ENCODE measurements at regions of chr5 and their contacts with region 1.

Region 1: DNA sequence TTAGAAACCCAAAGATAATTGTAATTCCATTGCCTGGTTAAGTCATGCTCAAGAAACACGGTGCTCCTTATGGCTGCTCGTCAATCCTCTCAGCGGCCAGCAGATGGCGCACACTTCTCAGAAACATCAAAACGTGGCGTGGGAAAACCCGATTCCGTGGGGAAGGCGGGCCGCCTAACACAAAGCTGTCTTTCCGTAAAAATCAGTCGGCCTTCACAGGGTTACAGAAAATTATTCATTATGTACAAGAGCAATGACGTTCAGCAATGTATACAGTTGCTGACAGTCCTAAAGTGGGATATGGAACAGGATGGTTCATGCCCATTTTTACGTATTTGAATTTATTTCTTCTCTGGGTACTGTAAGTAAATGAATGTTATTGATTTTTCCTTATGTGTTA is 83.5 kb downstream of the PDE4D start:
- DNase-seq: peak; percentile 56
- ATAC-seq: peak; percentile 39
- H3K4me3 Mint-ChIP-seq: no peak overlapping the region
- H3K27ac Mint-ChIP-seq: no peak overlapping the region
- H3K4me1 Mint-ChIP-seq: peaks cover 2% of the 10 kb centered on the region
- H3K27me3 Mint-ChIP-seq: peaks cover 24% of the 10 kb centered on the region

Region 2: DNA sequence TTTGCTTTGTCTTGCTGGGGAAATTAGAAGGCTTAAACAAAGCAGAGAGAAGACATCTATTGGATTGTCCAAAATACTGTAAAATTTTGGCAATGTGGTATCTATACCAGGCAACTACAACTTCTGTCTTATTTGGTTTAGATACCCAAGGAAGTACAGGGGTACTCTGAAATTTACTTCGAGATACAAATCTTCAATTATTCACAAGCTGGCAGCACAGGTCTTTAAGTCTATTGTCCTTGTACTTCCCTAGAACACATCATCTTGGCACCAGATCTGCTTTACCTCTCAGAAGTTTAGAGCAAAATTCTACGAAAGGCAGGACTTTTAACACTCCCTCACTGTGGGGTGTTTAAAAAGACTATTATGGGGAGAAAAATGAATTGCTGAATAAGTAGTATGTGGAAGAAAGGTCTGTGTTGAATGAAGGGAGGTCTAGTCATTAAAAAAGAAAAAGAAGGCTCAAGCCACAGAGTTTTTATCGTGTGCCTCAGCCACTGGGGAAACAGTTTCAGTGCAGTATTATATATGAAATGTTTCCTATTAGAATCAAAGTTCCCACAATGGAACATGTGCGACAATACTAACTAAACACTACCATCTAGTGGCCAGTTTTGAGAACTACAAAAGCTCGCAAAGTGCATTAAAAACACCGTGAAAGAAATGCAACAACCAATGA is 10.2 kb before region 1 on chr5:
- CTCF ChIA-PET with region 1: interaction called, 16 read pairs
- DNase-seq: no peak
- ATAC-seq: peak; percentile 60
- H3K4me3 Mint-ChIP-seq: no peak overlapping the region
- H3K27ac Mint-ChIP-seq: no peak overlapping the region
- H3K4me1 Mint-ChIP-seq: no peaks in the 10 kb centered on the region
- H3K27me3 Mint-ChIP-seq: peaks cover 18% of the 10 kb centered on the region

Region 3: DNA sequence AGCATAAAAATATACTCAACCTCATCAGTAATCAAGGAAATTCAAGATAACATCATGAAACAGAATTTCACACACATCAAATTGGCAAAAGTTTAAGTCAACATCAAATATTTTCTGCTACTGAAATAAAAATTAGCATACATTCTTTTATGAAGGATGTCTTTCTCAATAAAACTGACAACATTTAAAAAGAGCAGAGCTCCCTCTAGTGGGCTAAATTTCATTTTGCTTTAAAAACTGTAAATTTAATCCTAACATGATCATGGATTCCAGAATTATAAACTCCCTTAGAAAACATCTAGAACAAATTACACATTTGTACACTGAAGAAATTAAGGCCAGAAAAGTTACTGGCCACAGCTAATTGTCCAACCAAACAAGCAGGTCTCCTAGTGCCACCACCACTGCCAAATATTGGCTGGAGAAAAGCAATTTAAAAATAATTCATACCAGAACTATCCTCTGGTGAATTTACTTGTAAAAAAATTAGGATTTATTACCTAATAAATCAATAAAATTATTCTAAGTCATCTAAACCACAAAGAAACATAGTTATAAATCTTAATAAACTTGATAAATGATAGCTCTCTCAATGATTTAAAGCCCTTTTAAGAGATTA is 858.8 kb after region 1 on chr5:
- CTCF ChIA-PET with region 1: interaction called, 13 read pairs
- DNase-seq: no peak
- ATAC-seq: no peak
- H3K4me3 Mint-ChIP-seq: no peak overlapping the region
- H3K27ac Mint-ChIP-seq: no peak overlapping the region
- H3K4me1 Mint-ChIP-seq: no peaks in the 10 kb centered on the region
- H3K27me3 Mint-ChIP-seq: no peaks in the 10 kb centered on the region